Heart right ventricle (tissue), 16 donors: ENCODE measurements at regions of chr1 and their contacts with region 1.

Region 1: DNA sequence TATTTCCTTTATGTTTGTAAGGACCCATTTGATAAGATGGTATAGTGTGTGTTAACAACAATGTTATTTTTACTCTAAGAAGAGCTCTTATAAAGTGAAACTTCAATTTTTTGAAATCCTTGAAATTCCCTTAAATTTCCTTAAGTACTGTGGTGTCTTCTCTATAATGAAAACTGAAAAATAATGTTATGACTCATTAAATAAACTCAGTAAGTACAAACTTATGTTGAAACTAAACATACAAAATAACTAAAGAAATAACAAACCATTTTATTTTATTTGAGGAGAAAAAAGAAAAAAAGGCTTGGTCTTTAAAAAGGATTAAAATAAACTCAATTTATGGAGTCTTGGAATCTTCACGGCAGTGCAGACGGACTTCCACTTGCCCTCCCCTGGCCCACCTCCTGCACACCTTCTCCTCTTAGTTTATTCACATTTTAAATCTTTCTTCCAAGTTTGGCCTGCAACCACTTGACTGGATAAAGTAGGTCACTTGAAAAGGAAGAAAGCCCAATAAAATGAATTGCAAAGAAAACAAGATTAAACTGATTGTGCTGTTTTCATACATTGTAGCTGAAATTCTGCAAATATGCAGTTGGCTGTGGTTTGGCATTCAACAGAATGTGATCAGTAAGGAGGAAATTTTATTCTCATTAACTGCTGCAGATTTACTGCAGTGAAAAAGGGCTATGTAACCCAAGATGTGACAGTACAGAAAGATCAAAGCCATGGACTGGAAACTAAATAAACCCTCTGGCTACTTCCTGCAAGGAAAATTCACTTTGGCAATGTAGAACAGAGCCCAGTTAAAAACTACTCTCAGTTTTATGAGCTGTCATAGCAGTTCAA is 48.5 kb upstream of the SCYL3 start:
- DNase-seq: no peak
- ATAC-seq: no peak
- H3K4me3 ChIP-seq: no peak overlapping the region
- H3K27ac ChIP-seq: no peak overlapping the region
- H3K4me1 ChIP-seq: no peaks in the 10 kb centered on the region
- H3K27me3 ChIP-seq: no peaks in the 10 kb centered on the region
- CTCF ChIP-seq: no peak

Region 2: GRCh38 chr1:168408536-168409242 is 1533.5 kb before region 1 on chr1:
- intact Hi-C with region 1: loop called in 1 of 10 experiments (anchors 10 kb)
- DNase-seq: no peak
- ATAC-seq: no peak
- H3K4me3 ChIP-seq: no peak overlapping the region
- H3K27ac ChIP-seq: no peak overlapping the region
- H3K4me1 ChIP-seq: peaks cover 0 to 5% (median 0%) of the 10 kb centered on the region in 9 donors
- H3K27me3 ChIP-seq: no peaks in the 10 kb centered on the region
- CTCF ChIP-seq: no peak

Region 3: GRCh38 chr1:169925505-169926482 is 16.4 kb before region 1 on chr1:
- intact Hi-C with region 1: no loop called
- DNase-seq: no peak
- ATAC-seq: peak in 3 of 8 donors; percentile 59 to 64 (median 64)
- H3K4me3 ChIP-seq: no peak overlapping the region
- H3K27ac ChIP-seq: peak overlapping the region in 5 of 10 donors; percentile 5 to 63 (median 33)
- H3K4me1 ChIP-seq: peaks cover 0 to 14% (median 0%) of the 10 kb centered on the region in 9 donors
- H3K27me3 ChIP-seq: no peaks in the 10 kb centered on the region
- CTCF ChIP-seq: no peak

Region 4: DNA sequence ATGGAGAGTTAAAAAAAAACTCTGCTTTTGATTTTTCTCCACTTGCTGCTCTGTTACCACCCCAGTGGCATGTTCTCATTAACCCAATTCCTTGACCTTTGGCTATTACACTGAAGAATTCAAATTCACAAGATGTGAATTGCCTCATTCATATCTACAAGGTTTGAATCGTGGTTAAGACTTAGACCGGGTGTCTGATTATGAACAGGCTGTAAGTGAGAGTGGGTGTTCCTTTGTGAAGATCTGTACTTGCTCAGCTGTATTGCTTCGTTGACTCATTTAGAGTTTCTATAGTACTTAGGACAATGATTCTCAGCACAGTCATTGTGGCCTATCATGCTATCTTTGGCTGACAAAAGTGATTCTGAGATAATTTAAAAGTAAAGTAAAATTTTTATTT is 1935.5 kb after region 1 on chr1:
- intact Hi-C with region 1: loop called in 1 of 10 experiments (anchors 10 kb)
- DNase-seq: no peak
- ATAC-seq: no peak
- H3K4me3 ChIP-seq: no peak overlapping the region
- H3K27ac ChIP-seq: no peak overlapping the region
- H3K4me1 ChIP-seq: peaks cover 0 to 3% (median 0%) of the 10 kb centered on the region in 9 donors
- H3K27me3 ChIP-seq: no peaks in the 10 kb centered on the region
- CTCF ChIP-seq: no peak